ENCODE measurements at regions of chr4 and their contacts with region 1.

Region 1: GRCh38 chr4:98939892-98940298 is 11.0 kb upstream of the EIF4E start:
- DNase-seq: peak; percentile 68
- H3K4me3 Mint-ChIP-seq: no peak overlapping the region
- H3K27ac Mint-ChIP-seq: no peak overlapping the region
- H3K4me1 Mint-ChIP-seq: peaks cover 22% of the 10 kb centered on the region
- H3K27me3 Mint-ChIP-seq: no peaks in the 10 kb centered on the region
- CTCF ChIP-seq: peak; percentile 55

Region 2: DNA sequence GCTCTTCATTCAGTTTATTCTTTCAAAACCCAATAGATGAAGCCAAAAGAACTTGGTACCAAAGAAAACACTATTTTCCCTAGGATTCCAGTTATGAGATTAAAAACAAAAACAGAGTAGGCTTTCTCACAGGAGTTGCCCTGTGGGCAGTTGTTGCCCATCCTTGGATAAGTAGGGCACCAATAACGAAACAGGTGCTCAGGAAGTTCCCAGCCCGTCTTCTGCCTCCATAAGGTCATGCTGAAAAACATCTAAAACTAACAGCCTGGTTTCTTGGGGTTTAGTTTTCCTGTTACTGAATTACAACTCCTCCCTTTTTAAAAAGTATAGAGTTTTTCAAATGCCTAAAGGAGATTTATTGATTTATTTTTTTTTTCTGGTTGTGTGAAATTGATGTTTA is 296.1 kb before region 1 on chr4:
- CTCF ChIA-PET with region 1: no interaction called
- POLR2A ChIA-PET with region 1: no interaction called
- intact Hi-C with region 1: no loop called
- DNase-seq: no peak
- H3K4me3 Mint-ChIP-seq: no peak overlapping the region
- H3K27ac Mint-ChIP-seq: no peak overlapping the region
- H3K4me1 Mint-ChIP-seq: peaks cover 8% of the 10 kb centered on the region
- H3K27me3 Mint-ChIP-seq: no peaks in the 10 kb centered on the region
- CTCF ChIP-seq: no peak

Region 3: GRCh38 chr4:98950925-98951324 is 11.0 kb after region 1 on chr4:
- CTCF ChIA-PET with region 1: interaction called, 10 read pairs
- POLR2A ChIA-PET with region 1: interaction called, 4 read pairs
- intact Hi-C with region 1: no loop called
- DNase-seq: peak; percentile 29
- H3K4me3 Mint-ChIP-seq: no peak overlapping the region
- H3K27ac Mint-ChIP-seq: no peak overlapping the region
- H3K4me1 Mint-ChIP-seq: no peaks in the 10 kb centered on the region
- H3K27me3 Mint-ChIP-seq: no peaks in the 10 kb centered on the region
- CTCF ChIP-seq: no peak

Region 4: GRCh38 chr4:99749445-99750391 is 809.8 kb after region 1 on chr4:
- CTCF ChIA-PET with region 1: no interaction called
- POLR2A ChIA-PET with region 1: no interaction called
- intact Hi-C with region 1: no loop called
- DNase-seq: no peak
- H3K4me3 Mint-ChIP-seq: no peak overlapping the region
- H3K27ac Mint-ChIP-seq: no peak overlapping the region
- H3K4me1 Mint-ChIP-seq: peaks cover 6% of the 10 kb centered on the region
- H3K27me3 Mint-ChIP-seq: no peaks in the 10 kb centered on the region
- CTCF ChIP-seq: no peak

Measured in MCF 10A (cell line).